Activated CD4-positive, alpha-beta T cell treated with anti-CD3 and anti-CD28 coated beads, Interleukin-2, amount 10 ng/mL, durations not matched to agents 7 days and 5 days (primary cell): ENCODE measurements at regions of chr12 and their contacts with region 1.

Region 1: GRCh38 chr12:4604684-4605193 is 42.7 kb downstream of the DYRK4 start:
- DNase-seq: peak; percentile 85
- H3K4me3 Mint-ChIP-seq: peak overlapping the region; percentile 94
- H3K27ac Mint-ChIP-seq: peak overlapping the region; percentile 92
- H3K4me1 Mint-ChIP-seq: peaks cover 15% of the 10 kb centered on the region
- H3K27me3 Mint-ChIP-seq: peaks cover 8% of the 10 kb centered on the region

Region 2: DNA sequence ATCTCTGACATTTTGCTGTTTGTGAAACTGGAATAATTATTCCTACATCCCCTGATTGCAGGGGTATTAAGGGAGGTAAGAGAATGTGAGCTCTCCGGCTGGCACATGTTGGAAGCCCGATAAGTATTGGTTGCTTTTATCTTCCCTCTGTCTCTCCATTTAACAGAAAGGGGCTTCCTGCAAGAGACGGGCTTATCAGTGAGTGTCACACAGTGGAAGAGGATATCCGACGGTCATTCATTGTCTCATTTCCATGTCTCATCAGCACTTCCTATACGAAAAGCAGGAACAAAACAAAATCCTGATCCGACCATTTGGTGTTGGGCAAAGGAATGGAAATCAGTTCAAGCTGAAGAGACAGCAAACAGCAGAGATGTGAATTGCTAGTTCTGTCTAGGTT is 32.1 kb before region 1 on chr12:
- CTCF ChIA-PET with region 1: no interaction called
- POLR2A ChIA-PET with region 1: no interaction called
- DNase-seq: no peak
- H3K4me3 Mint-ChIP-seq: no peak overlapping the region
- H3K27ac Mint-ChIP-seq: no peak overlapping the region
- H3K4me1 Mint-ChIP-seq: no peaks in the 10 kb centered on the region
- H3K27me3 Mint-ChIP-seq: peaks cover 8% of the 10 kb centered on the region

Region 3: DNA sequence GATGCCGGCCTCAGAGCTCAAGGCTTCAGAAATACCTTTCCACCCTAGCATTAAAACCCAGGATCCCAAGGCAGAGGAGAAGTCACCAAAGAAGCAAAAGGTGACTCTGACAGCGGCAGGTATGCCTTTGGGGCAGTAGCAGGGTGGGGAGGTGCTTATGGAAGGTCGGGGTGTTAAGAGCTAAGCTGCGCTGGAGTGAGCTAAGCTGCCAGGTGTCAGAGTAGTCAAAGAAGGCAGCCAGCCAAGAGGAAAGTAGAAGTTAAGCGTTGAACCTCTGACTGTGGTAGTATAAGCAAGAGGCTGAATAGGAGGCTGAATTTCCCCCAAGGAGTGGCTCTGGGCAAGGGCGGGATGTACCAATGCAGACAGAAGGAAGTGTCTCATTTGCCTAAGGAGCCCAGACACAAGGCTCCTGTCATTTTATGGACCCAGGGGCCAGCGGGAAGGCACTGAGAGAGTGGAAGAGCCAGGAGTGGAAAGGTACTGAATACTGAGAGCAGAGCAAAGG is 13.5 kb before region 1 on chr12:
- CTCF ChIA-PET with region 1: interaction called, 14 read pairs
- POLR2A ChIA-PET with region 1: no interaction called
- DNase-seq: no peak
- H3K4me3 Mint-ChIP-seq: no peak overlapping the region
- H3K27ac Mint-ChIP-seq: no peak overlapping the region
- H3K4me1 Mint-ChIP-seq: no peaks in the 10 kb centered on the region
- H3K27me3 Mint-ChIP-seq: no peaks in the 10 kb centered on the region

Region 4: DNA sequence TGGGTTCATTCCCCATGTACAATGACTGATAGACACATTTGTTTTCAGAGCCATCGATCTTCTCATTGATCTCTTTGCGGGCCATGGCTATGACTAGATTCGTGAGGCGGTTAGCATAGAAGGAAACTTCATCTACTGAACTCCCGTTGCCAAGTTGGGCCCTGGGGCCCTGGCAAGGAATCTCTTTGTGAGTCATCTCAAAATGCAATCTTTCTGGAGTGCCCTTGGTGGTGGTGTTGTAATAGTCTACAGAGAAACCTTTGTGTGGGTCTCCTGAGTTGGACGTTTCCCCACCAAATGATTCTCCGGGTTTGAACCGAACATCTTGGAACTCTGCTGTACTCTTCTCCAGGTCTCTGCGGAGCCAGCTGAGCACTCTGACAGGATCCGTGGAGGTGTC is 23.7 kb after region 1 on chr12:
- CTCF ChIA-PET with region 1: no interaction called
- POLR2A ChIA-PET with region 1: no interaction called
- DNase-seq: no peak
- H3K4me3 Mint-ChIP-seq: no peak overlapping the region
- H3K27ac Mint-ChIP-seq: no peak overlapping the region
- H3K4me1 Mint-ChIP-seq: no peaks in the 10 kb centered on the region
- H3K27me3 Mint-ChIP-seq: peaks cover 27% of the 10 kb centered on the region

Region 5: DNA sequence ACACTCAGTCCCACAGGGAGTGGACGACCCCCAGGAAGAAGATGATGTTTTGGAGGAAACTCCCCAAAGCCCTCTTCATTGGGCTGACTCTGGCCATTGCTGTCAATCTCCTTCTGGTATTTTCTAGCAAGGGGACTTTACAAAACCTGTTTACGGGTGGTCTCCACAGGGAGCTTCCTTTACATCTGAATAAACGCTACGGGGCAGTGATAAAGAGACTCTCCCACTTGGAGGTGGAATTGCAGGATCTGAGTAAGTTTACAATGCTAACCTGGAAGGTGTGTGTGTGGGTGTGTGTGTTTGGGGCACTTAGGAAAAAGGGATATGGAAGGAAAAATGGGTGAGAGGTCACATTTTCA is 115.9 kb after region 1 on chr12:
- CTCF ChIA-PET with region 1: no interaction called
- POLR2A ChIA-PET with region 1: no interaction called
- DNase-seq: no peak
- H3K4me3 Mint-ChIP-seq: no peak overlapping the region
- H3K27ac Mint-ChIP-seq: no peak overlapping the region
- H3K4me1 Mint-ChIP-seq: no peaks in the 10 kb centered on the region
- H3K27me3 Mint-ChIP-seq: peaks cover 34% of the 10 kb centered on the region